ENCODE measurements at regions of chr6 and their contacts with region 1.

Region 1: DNA sequence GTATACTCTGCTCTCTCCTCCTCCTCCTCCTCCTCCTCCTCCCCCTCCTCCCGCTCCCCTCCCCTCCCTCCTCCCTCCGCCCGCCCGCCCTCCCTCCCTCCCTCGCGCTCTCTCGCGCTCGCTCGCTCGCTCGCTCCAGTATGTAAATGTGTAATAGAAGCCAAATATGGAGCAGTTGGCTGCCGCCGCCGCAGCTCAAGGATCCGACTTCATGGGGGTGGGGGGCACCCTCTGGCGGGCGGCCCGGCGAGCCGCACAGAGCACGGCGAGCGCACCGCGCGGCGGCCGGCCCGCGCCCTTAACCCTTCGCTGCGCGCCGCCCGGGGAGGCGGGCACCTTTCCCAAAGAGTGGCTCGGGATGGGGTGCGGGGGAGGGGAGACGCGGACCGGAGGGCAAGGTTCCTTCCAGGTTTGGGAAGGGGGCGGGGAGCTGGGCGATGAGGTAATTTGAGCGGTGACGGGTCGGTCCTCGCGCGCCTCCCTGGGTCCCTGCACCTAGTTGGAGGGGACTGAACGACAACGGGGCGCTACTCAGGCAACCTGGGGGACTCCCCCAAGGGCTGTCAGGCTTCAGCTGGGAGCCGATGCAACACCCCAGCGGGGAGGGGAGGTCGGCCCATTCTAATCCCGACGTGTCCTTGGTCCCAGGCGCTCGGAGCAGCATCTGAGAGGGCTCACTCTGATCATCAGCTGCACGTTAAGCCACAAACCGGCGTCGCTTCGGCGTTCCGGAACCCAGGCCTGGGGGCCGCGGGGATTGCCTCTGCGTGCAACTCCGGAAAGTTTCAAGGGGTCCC is 409 bp upstream of the ATXN1 start:
- DNase-seq: peak; percentile 91
- ATAC-seq: peak; percentile 60
- H3K4me3 Mint-ChIP-seq: peak overlapping the region; percentile 91
- H3K27ac Mint-ChIP-seq: peak overlapping the region; percentile 94
- H3K4me1 Mint-ChIP-seq: peaks cover 58% of the 10 kb centered on the region
- H3K27me3 Mint-ChIP-seq: no peaks in the 10 kb centered on the region

Region 2: DNA sequence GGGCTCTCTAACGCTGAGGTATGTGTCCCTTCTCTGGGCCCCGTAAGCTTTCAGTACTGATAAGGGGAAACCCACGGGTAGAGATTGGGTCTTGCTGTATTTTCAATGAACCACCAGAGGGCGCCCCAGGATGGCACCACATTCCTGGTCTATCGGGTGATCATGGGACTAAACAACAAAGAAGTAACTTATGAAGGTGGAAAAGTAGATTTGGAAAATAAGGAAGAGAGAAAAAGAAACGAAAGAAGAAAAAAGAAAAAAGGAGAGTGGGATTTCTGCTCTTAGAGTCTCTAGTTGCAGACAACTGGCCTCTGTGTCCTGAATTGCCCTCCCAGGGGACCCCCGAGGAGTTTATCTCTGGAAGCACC is 429.5 kb before region 1 on chr6:
- CTCF ChIA-PET with region 1: interaction called, 14 read pairs
- POLR2A ChIA-PET with region 1: no interaction called
- intact Hi-C with region 1: loop called in 1 of 2 experiments (anchors 1 kb)
- DNase-seq: peak; percentile 91
- ATAC-seq: peak; percentile 98
- H3K4me3 Mint-ChIP-seq: no peak overlapping the region
- H3K27ac Mint-ChIP-seq: no peak overlapping the region
- H3K4me1 Mint-ChIP-seq: no peaks in the 10 kb centered on the region
- H3K27me3 Mint-ChIP-seq: no peaks in the 10 kb centered on the region

Region 3: GRCh38 chr6:16533721-16534136 is 227.9 kb before region 1 on chr6:
- CTCF ChIA-PET with region 1: interaction called, 10 read pairs
- POLR2A ChIA-PET with region 1: interaction called, 3 read pairs
- intact Hi-C with region 1: loop called (anchors 1 to 2 kb)
- DNase-seq: no peak
- ATAC-seq: peak; percentile 89
- H3K4me3 Mint-ChIP-seq: no peak overlapping the region
- H3K27ac Mint-ChIP-seq: peak overlapping the region; percentile 75
- H3K4me1 Mint-ChIP-seq: peaks cover 29% of the 10 kb centered on the region
- H3K27me3 Mint-ChIP-seq: no peaks in the 10 kb centered on the region

Region 4: DNA sequence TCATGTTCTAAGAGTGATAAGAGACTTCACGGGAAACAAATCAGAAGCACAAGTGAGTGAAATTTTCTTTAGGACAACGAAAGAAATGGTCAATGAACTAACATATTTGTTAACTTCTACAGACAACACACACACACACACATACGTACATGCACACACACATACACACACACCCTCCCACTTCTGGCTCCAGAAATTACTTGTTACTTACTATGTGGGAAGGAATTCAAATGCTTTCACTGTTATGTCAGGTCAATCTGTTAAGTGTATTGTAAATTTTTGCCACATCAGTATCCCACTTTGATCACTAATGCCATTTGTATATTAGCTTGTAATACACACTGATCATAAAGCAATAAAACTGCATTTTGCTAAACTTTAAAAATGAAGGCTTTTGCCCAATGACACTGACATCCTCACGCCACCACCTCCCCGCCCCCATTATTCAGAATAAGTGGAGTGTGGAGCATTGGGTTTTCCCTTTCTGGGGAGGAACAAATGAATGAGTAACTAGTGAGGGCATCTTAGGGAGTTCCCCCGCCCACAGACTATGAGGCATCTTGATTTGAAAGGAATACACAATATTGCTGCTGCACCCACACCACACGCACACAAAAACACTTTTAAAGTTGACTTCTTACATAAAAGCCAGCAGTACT is 76.6 kb before region 1 on chr6:
- CTCF ChIA-PET with region 1: interaction called, 6 read pairs
- POLR2A ChIA-PET with region 1: interaction called, 3 read pairs
- intact Hi-C with region 1: loop called (anchors 1 kb)
- DNase-seq: peak; percentile 95
- ATAC-seq: peak; percentile 76
- H3K4me3 Mint-ChIP-seq: peak overlapping the region; percentile 43
- H3K27ac Mint-ChIP-seq: peak overlapping the region; percentile 78
- H3K4me1 Mint-ChIP-seq: peaks cover 86% of the 10 kb centered on the region
- H3K27me3 Mint-ChIP-seq: no peaks in the 10 kb centered on the region

Region 5: GRCh38 chr6:16741112-16742016 is 20.3 kb before region 1 on chr6:
- CTCF ChIA-PET with region 1: interaction called, 13 read pairs
- POLR2A ChIA-PET with region 1: interaction called, 4 read pairs
- intact Hi-C with region 1: no loop called
- DNase-seq: no peak
- ATAC-seq: peak; percentile 92
- H3K4me3 Mint-ChIP-seq: no peak overlapping the region
- H3K27ac Mint-ChIP-seq: peak overlapping the region; percentile 39
- H3K4me1 Mint-ChIP-seq: peaks cover 60% of the 10 kb centered on the region
- H3K27me3 Mint-ChIP-seq: no peaks in the 10 kb centered on the region

Region 6: GRCh38 chr6:17086469-17086868 is 324.8 kb after region 1 on chr6:
- CTCF ChIA-PET with region 1: interaction called, 4 read pairs
- POLR2A ChIA-PET with region 1: no interaction called
- intact Hi-C with region 1: loop called in 1 of 2 experiments (anchors 2 kb)
- DNase-seq: peak; percentile 44
- ATAC-seq: no peak
- H3K4me3 Mint-ChIP-seq: no peak overlapping the region
- H3K27ac Mint-ChIP-seq: no peak overlapping the region
- H3K4me1 Mint-ChIP-seq: no peaks in the 10 kb centered on the region
- H3K27me3 Mint-ChIP-seq: peaks cover 24% of the 10 kb centered on the region

Measured in activated CD4-positive, alpha-beta T cell treated with anti-CD3 and anti-CD28 coated beads for 36 hours (primary cell).